AG04449 (cell line): ENCODE measurements at regions of chr18 and their contacts with region 1.

Region 1: DNA sequence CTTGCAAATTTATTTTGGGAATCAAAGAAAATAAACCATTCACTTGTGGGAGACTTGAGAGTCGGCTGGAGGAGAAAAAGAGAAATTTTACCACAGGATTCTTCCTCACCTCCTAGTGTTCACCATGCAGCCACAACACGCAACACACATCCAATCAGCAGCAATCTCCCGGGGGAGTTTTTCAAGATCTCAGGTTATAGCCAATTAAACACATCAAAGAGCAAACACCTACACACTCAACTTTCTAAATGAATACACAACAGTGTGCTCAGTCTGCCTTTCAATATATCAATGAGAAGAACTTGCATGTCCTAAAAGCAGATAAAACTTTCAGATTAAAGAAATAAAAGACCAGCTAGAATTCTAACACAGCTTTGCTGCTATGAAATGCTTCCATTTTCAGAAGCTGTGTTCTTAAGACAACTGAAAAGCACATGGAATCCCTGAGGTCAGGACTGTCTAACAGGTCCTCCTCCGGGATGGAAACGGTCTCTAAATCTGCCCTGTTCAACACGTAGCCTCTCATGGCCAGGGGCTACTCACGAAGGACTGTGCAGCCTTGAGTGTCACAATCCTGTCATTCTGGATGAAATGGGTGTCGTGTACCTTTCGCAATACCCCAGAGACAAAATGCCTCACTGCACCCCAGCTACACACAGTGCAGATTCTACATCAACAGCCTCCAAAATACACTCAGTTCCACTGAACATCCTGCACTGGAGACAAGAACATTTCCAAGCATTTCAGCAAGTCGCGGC is 84.2 kb downstream of the ZNF516 start:
- DNase-seq: no peak
- H3K4me3 ChIP-seq: no peak overlapping the region
- CTCF ChIP-seq: no peak

Region 2: DNA sequence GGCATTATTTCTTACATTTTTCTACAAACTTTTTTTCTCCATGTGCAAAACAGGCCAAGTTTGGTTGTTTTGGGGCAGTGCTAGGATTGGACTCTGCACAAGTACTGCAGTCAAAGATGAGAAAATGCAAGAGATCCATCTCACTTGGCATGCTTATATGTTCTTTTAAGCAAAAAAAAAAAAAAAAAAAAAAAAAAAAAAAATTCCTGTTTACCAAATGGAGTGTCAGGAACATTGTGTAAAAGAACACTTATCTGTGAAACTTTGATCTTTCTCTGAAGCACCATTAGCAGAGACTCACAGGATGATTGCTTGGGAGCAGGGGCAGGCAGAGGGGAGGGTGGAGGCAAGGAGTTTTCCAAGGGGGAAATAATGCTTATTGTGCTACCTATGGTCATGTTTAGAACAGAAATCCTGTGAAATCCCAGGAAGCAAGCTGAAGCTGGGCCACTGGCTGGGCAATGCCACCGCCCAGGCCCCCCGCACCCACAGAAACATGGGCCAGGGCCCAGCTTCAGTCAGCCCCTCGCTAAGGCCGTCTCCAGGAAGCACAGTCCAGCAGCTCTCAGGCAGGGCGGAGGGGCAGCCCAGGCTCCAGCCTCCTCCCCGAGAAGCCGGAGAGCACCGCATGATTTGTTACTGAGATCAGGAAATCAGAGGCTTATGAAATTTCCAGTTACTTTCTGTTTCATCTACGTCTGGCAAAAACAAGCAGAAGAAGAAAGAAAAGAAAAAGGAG is 145.2 kb before region 1 on chr18:
- CTCF ChIA-PET with region 1: no interaction called
- POLR2A ChIA-PET with region 1: no interaction called
- DNase-seq: no peak
- H3K4me3 ChIP-seq: no peak overlapping the region
- CTCF ChIP-seq: no peak

Region 3: DNA sequence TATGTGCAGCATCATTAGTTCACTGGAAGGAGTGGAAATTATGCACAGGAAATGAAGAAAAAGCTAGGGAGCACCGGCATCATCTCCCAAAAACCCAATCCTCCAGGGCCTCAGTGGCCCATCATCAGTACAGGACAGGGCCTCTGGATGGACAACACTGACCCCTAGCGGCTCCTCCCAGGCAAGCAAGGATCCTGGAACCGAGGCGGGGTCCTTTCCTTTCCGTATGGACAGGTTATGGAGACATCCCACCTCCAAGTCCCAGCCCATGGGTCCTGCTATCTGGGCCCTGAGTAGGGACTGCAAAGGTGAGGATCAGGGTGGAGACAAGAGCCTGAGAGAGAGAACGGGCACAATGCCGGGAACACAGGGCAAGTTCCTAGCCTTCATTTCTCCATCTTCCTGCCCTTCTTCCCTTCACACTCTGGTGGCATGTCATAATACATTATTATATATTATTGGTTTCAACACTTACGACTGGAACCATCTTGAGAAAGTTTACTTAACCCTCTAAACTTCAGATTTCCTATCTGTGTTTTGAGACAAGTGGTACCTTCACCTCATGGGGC is 16.0 kb after region 1 on chr18:
- CTCF ChIA-PET with region 1: interaction called, 16 read pairs
- POLR2A ChIA-PET with region 1: no interaction called
- DNase-seq: no peak
- H3K4me3 ChIP-seq: no peak overlapping the region
- CTCF ChIP-seq: peak; percentile 82